Breast epithelium (tissue), 4 donors: ENCODE measurements at regions of chr10 and their contacts with region 1.

Region 1: GRCh38 chr10:33092596-33092995 is 134.6 kb upstream of the ITGB1 start:
- DNase-seq: no peak
- H3K4me3 ChIP-seq: no peak overlapping the region
- H3K27ac ChIP-seq: no peak overlapping the region
- H3K4me1 ChIP-seq: no peaks in the 10 kb centered on the region
- H3K27me3 ChIP-seq: no peaks in the 10 kb centered on the region
- CTCF ChIP-seq: no peak
- POLR2A ChIP-seq: no peak

Region 2: GRCh38 chr10:33073641-33074415 is 18.8 kb before region 1 on chr10:
- intact Hi-C with region 1: loop called (anchors 1 kb)
- DNase-seq: no peak
- H3K4me3 ChIP-seq: peak overlapping the region in 1 of 3 donors; percentile 3
- H3K27ac ChIP-seq: peak overlapping the region in 1 of 2 donors; percentile 32
- H3K4me1 ChIP-seq: no peaks in the 10 kb centered on the region
- H3K27me3 ChIP-seq: no peaks in the 10 kb centered on the region
- CTCF ChIP-seq: no peak
- POLR2A ChIP-seq: no peak